Posterior cingulate gyrus (tissue), 11 donors: ENCODE measurements at regions of chr1 and their contacts with region 1.

Region 1: DNA sequence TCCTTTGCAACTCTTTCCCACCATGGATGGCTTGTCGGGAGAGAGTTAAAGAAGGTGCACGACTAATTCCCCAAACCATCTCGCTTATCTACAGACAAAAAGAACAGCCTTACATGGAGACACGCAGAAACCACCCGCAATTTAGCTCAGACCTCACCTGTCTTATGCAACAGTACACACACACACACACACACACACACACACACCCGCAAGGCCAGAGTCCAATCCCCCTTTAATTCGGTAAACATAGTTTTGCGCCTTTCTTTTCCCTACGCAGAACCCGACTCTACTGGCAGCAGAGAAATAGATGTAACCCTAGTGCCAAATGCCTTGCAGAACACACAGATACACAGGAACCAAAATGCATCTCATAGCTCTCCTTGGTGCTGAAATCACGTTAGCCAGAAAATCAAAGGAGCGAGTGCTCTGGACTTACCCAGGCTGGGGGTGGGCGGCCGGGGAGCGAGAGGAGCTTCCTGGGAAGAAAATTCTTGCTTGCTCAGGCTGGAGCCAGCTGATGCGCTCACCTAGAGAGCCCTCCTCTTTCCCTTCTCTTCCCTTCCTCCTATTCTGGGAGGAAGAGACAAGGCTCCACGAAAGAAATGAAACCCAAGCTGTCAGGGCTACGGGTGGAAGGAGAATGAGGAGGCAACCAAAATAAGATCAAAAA is 470 bp downstream of the TNR start:
- DNase-seq: peak in 7 of 10 donors; percentile 36 to 91 (median 45)

Region 2: GRCh38 chr1:175373786-175374623 is 368.9 kb before region 1 on chr1:
- intact Hi-C with region 1: loop called (anchors 10 kb)
- DNase-seq: peak in 7 of 10 donors; percentile 17 to 88 (median 48)

Region 3: GRCh38 chr1:175471039-175471800 is 271.7 kb before region 1 on chr1:
- intact Hi-C with region 1: loop called (anchors 10 kb)
- DNase-seq: no peak

Region 4: GRCh38 chr1:175725684-175726083 is 17.2 kb before region 1 on chr1:
- intact Hi-C with region 1: no loop called
- DNase-seq: no peak

Region 5: DNA sequence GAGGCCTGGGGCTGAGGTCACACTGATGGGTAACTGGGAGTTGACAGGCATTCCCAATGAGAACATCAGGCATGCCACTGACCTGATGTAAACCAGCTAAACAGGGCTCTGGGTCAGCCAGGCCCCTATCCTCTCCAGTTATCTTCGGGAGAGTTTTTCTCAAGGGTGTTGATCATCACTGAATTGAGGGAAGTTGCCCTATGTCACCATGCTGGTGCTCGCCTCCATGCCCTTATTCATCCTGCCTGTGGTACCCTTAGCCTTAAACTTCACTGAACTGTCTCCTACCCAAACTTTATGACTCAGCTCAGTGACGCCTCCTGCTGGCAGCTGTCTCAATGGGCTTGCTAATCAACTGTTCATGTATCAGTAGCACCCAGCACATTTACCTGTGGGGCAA is 81.2 kb after region 1 on chr1:
- intact Hi-C with region 1: no loop called
- DNase-seq: no peak

Region 6: GRCh38 chr1:175848329-175848728 is 105.4 kb after region 1 on chr1:
- intact Hi-C with region 1: loop called (anchors 5 kb)
- DNase-seq: no peak

Region 7: GRCh38 chr1:175865041-175865766 is 122.3 kb after region 1 on chr1:
- intact Hi-C with region 1: loop called (anchors 1 kb)
- DNase-seq: peak; percentile 51 to 95 (median 78)

Region 8: DNA sequence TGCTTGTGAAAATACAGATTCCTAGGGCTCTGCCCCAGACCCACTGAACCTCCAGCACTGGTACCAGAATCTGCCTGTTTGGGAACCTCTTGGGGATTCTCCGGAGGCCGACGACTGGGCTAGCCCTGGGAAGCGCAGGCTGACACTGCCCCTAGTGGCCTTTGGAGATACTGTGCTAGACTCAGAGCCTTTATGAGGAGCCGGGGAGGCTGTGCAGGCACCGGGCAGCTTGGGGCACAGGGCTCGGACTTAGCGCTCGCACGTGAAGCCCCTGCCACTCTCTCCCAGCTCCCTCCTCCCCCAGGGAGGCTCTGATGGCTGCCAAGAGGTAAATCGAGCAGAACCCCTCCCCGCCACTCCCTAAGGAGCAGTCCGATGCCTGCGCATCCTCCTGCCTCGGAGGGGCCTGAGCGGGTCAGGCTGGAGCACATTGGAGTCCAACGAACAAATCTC is 145.1 kb after region 1 on chr1:
- intact Hi-C with region 1: loop called (anchors 5 kb)
- DNase-seq: peak; percentile 61 to 98 (median 82)